Heart right ventricle (tissue), 16 donors: ENCODE measurements at regions of chr1 and their contacts with region 1.

Region 1: DNA sequence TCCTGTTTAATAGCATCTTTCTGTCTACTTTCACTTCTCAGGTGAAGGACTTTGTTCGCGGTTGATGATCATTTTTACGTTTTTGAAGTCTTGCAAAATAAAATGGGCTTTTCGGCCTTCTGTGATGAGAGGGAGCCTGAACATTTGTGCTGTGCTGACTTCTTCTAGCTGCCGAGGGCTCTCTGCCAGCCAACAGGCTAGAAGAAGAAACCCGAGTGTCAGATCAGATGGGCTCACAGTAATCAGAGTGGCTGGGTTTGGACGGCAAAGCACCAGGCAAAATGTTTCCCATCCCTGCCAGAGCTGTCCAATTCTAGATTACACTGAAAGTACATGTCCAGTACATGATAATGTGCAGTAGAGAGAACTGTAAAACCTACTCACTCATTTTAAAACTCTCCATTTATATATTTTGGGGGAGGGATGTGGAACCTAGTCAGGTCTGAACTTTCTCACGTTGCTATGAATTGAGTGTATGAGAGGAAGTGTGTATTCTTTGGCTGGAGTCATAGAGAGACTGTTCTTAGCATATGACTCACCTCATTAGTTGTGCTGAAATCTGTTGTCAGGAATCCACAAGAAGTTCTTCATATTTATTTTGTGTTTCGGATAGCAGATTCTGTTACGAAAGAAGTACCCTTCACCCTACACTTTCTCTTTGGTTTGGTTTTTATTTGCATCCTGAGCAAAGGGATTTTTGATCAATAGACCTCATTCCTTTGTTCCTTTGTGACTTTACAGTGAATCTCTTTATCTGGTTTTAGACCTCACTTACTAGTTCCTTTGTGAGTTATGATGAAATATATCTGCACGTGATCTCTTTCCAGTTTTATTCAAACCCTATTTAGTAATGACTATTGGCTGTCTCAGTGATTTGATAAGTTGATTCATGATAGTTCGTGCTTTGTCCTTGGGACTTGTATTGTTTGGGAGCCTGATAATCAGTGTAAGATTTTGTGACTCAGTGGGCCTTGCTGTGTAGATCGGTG is 4.8 kb downstream of the ATP1A1 start:
- DNase-seq: peak; percentile 57 to 62
- ATAC-seq: peak in 7 of 8 donors; percentile 18 to 51 (median 47)
- H3K4me3 ChIP-seq: peak overlapping the region in 7 of 10 donors; percentile 3 to 88 (median 29)
- H3K27ac ChIP-seq: peak overlapping the region; percentile 91 to 98 (median 97)
- H3K4me1 ChIP-seq: peaks cover 28 to 92% (median 86%) of the 10 kb centered on the region in 9 donors
- H3K27me3 ChIP-seq: no peaks in the 10 kb centered on the region
- CTCF ChIP-seq: no peak

Region 2: DNA sequence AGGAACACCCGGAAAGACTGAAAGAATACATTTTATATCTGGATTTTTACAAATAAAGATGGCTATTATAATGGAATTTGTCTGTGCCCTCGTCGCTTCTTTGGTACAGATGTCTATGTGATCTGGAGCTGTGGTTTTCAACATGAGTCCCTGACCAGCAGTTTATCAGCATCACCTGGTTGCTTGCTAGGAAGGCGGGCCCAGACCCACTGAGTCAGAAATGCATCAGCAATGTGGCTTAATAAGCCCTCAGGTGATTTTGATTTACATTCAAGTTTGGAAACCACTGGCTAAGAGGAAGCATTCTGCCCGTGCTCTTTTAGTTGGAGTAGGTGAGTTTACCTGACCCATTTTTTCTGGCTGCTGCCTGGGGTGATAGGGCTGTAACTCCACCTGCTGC is 26.9 kb after region 1 on chr1:
- intact Hi-C with region 1: loop called in 1 of 10 experiments (anchors 1 kb)
- DNase-seq: no peak
- ATAC-seq: no peak
- H3K4me3 ChIP-seq: no peak overlapping the region
- H3K27ac ChIP-seq: peak overlapping the region in 9 of 10 donors; percentile 9 to 71 (median 62)
- H3K4me1 ChIP-seq: peaks cover 0 to 37% (median 14%) of the 10 kb centered on the region in 9 donors
- H3K27me3 ChIP-seq: no peaks in the 10 kb centered on the region
- CTCF ChIP-seq: no peak

Region 3: GRCh38 chr1:116411784-116412479 is 34.1 kb after region 1 on chr1:
- intact Hi-C with region 1: loop called in 7 of 10 experiments (anchors 5 kb)
- DNase-seq: no peak
- ATAC-seq: no peak
- H3K4me3 ChIP-seq: no peak overlapping the region
- H3K27ac ChIP-seq: peak overlapping the region in 6 of 10 donors; percentile 17 to 55 (median 34)
- H3K4me1 ChIP-seq: peaks cover 2 to 62% (median 27%) of the 10 kb centered on the region in 9 donors
- H3K27me3 ChIP-seq: no peaks in the 10 kb centered on the region
- CTCF ChIP-seq: no peak